HEK293 (cell line): ENCODE measurements at regions of chr1 and their contacts with region 1.

Region 1: GRCh38 chr1:151327223-151327902 is at the start of gene PI4KB:
- H3K4me3 ChIP-seq: peak within 1 kb of the TSS; percentile 83
- H3K27ac ChIP-seq: peak within 1 kb of the TSS; percentile 85
- H3K4me1 ChIP-seq: peaks cover 3% of the 10 kb centered on the region; the same call in 1 of the 2 replicates
- CTCF ChIP-seq: no peak

Region 2: DNA sequence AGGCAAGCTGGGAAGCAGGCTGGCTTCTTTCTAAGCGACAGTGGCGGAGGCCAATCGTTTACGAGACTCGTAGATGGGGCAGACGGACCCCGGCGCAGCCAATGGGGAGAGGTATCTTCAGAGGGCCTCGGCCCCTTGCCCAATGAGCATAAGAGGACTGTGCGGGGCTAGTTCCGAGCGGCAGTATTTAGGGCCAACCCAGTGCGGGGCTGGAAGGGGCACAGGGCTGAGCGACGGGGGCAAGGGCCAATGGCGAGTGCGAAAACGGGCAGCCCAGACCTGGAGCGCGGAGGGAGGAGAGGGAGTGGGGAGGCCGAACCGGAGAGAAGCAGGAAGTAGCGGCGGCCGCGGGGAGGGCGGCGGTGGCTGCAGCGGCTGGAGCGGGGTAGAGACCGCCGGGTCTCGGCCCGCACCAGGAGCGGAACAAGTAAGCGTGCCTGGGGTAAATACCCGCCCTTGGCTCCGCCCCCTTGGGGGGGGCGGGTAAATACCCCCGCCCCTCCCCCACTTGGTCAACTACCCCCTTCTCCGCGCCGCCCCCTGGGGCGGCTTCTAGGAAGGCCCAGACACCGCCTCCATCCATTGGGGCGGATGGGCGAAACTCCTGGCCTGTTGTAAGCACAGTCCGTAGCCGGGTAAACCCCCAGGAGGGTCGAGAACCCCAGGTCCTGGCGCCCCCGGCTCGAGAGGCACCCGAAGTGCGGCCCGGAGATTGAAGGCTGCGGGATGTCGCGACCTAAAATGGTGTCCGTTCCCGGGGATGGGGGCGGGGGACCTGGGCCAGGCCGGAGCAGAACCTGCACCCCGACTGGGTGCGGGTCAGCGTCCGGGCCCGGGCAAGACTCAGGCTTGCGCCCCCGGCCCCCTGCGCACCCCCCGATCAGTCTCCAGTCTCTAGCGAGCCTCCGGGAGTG is 45.1 kb before region 1 on chr1 and contains the start of gene ZNF687:
- CTCF ChIA-PET with region 1: interaction called, 5 read pairs
- POLR2A ChIA-PET with region 1: interaction called, 12 read pairs
- H3K4me3 ChIP-seq: peak within 1 kb of the TSS; percentile 77
- H3K27ac ChIP-seq: peak within 1 kb of the TSS; percentile 90
- H3K4me1 ChIP-seq: no peaks in the 10 kb centered on the region
- CTCF ChIP-seq: no peak

Region 3: DNA sequence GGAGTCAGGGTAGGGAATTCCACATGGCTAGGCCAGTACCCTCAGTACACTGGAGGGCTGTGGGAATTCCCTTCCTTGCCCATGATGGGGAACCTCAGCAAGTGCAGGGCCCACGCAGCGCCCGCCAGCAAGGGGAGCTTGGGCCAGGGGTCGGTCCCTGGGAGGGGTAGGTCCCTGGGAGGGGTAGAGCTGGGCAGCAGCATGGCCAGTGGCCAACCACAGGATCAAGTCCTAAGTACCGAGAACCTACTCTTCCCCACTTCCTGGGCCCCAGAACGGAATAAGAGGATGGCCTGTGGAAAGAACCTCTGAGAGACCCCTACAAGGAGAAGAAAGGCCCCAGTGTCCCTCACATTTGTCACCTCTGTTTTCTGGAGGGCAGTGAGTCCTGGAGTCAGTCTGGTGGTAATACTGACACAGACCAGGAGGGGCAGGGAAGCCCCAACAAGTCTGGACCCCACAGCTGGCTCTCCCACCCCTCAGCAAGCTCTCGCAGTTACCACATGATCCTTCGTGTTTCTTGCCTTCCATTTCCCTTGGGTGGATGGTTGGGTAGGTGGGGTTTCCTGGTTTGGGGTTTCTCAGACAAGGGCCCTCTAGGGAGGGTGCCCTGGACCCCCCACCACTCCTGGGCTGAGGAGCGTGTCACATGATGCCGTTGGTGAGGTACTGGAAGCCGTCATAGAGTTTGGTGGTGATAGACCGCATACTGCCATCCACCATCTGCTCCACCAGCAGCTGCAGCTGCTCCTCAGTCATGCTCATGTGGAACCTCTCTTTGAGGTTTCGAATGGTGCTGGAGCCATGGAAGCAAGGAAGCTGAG is 34.9 kb before region 1 on chr1:
- CTCF ChIA-PET with region 1: interaction called, 4 read pairs
- POLR2A ChIA-PET with region 1: interaction called, 11 read pairs
- H3K4me3 ChIP-seq: no peak overlapping the region
- H3K27ac ChIP-seq: no peak overlapping the region
- H3K4me1 ChIP-seq: no peaks in the 10 kb centered on the region
- CTCF ChIP-seq: no peak

Region 4: GRCh38 chr1:151311589-151312331 is 15.6 kb before region 1 on chr1:
- CTCF ChIA-PET with region 1: interaction called, 8 read pairs
- POLR2A ChIA-PET with region 1: interaction called, 56 read pairs
- H3K4me3 ChIP-seq: no peak overlapping the region
- H3K27ac ChIP-seq: peak overlapping the region; percentile 37
- H3K4me1 ChIP-seq: no peaks in the 10 kb centered on the region
- CTCF ChIP-seq: no peak

Region 5: DNA sequence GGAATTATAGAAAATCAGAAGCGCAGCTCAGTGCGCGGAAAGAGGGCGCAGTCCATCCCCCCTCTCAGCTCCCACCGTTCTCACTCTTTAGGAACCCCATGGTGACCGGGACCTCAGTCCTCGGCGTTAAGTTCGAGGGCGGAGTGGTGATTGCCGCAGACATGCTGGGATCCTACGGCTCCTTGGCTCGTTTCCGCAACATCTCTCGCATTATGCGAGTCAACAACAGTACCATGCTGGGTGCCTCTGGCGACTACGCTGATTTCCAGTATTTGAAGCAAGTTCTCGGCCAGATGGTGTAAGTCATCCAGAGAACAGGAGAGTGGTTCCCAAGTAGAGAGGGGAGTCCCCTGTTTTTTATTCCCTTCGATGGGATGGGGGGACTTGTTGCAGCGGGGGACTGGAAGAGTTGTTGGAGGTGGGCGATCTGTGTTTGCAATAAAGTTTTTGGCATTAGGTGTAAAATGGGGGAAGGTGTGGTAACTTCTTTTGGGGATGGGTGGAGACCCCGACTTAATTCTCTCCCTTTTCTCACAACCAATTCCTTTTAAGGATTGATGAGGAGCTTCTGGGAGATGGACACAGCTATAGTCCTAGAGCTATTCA is 72.6 kb after region 1 on chr1:
- CTCF ChIA-PET with region 1: interaction called, 3 read pairs
- POLR2A ChIA-PET with region 1: interaction called, 12 read pairs
- H3K4me3 ChIP-seq: peak overlapping the region; percentile 91
- H3K27ac ChIP-seq: peak overlapping the region; percentile 71
- H3K4me1 ChIP-seq: no peaks in the 10 kb centered on the region
- CTCF ChIP-seq: no peak